ENCODE measurements at regions of chr1 and their contacts with region 1.

Region 1: DNA sequence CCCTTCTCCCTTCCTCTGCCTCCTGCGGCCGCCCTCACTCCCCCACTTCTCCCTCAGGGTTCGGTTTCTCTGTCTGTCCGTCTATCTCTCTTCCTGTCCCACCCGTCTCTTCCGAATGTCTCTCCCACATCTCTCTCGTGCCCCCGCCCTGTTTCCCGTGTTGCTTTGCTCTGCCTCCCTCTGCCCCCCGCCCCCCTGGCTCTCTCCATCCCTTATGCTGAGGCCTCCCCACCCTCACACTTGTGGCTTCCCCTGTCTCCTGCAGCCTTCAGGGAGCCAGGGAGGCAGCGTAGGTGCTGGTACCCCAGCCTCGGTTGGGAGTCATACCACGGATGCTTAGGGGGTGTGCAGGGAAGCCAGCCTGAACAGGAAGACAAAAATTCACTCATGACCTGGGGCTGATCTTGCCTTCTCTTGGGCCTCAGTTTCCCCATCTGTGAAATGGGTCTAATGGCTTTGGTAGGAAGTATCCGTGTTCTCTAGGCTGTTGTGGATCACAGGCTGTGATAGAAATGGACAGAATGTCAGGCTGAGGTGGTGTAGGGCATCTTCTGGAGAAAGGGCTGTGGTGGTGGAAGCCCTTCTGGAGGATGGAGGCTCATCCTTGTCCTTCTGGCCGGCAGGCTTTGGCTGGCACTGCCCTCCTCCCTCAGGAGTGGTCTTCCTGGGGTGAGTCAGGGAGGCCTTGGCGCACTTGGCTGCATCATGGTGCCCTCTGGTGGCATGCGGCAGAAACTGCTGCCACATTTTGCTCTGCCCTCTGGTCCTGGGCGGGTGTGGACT is 55.5 kb downstream of the FOXO6 start:
- DNase-seq: peak; percentile 78
- ATAC-seq: peak; percentile 74
- H3K4me3 Mint-ChIP-seq: no peak overlapping the region
- H3K27ac Mint-ChIP-seq: no peak overlapping the region
- H3K4me1 Mint-ChIP-seq: no peaks in the 10 kb centered on the region
- H3K27me3 Mint-ChIP-seq: peaks cover 7% of the 10 kb centered on the region

Region 2: GRCh38 chr1:41093826-41094225 is 322.9 kb before region 1 on chr1:
- CTCF ChIA-PET with region 1: no interaction called
- POLR2A ChIA-PET with region 1: no interaction called
- intact Hi-C with region 1: no loop called
- DNase-seq: no peak
- ATAC-seq: no peak
- H3K4me3 Mint-ChIP-seq: no peak overlapping the region
- H3K27ac Mint-ChIP-seq: no peak overlapping the region
- H3K4me1 Mint-ChIP-seq: no peaks in the 10 kb centered on the region
- H3K27me3 Mint-ChIP-seq: no peaks in the 10 kb centered on the region

Region 3: GRCh38 chr1:41144285-41144684 is 272.5 kb before region 1 on chr1:
- CTCF ChIA-PET with region 1: no interaction called
- POLR2A ChIA-PET with region 1: no interaction called
- intact Hi-C with region 1: no loop called
- DNase-seq: no peak
- ATAC-seq: no peak
- H3K4me3 Mint-ChIP-seq: no peak overlapping the region
- H3K27ac Mint-ChIP-seq: no peak overlapping the region
- H3K4me1 Mint-ChIP-seq: no peaks in the 10 kb centered on the region
- H3K27me3 Mint-ChIP-seq: no peaks in the 10 kb centered on the region

Region 4: DNA sequence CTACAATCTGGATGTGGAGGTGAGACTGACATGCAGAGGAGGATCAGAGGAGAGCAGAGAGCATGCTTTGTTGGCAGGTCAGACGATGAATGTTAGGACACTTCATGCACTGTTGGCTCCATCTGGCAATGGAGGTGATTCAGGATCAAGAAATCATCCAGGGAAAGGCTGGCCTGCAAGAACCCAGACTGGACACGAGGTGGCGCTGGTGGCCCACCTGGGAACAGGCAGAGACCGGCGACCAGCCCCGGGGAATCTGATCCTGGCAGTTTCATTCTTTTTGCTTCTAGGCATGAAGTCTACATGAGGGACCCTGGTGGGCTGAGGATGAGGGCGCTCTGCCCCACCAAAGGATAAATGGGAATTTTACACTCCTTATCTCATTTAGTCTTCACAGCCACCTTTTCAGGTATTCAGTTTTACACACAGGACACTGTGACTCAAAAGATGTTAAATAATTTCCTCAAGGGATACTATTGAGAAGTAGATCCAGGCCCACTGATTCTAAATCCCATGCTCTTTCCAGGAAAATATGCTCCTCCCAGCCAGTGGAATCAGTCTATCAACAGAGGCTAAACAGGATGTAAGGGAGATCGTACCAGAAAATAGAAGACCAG is 148.5 kb before region 1 on chr1:
- CTCF ChIA-PET with region 1: interaction called, 7 read pairs
- POLR2A ChIA-PET with region 1: no interaction called
- intact Hi-C with region 1: loop called (anchors 1 kb)
- DNase-seq: peak; percentile 80
- ATAC-seq: peak; percentile 57
- H3K4me3 Mint-ChIP-seq: no peak overlapping the region
- H3K27ac Mint-ChIP-seq: no peak overlapping the region
- H3K4me1 Mint-ChIP-seq: no peaks in the 10 kb centered on the region
- H3K27me3 Mint-ChIP-seq: peaks cover 9% of the 10 kb centered on the region

Region 5: DNA sequence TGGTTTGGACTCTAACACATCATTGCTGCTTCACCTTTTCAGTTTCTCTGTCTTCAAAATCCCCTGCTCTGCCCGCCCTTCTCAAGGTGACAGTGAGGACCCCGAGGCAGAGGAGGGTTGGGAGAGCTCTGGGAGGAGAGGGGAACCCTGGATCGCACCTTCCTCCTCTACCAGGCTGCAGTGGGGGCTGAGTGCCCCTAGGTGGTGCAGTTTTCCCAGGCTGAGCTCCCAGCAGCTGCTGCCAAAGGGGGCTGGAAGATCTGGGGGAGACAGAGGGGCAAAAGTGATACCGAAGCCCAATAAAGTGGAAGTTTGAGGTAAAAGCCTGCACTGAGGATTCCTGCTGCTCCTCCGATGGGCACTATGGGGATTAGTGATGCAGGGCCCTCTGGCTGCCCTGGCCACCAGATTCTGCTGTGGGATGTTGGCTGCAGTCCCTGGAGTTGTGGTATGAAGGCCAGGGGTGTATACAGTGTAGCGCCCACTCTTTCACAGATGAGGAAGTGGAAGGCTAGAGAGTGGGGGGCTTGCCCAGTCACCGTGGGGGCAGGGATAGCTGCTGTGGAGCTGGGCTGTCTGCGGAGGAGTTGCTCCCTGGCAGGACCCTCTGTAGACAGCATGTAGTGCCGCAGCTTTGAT is 133.9 kb before region 1 on chr1:
- CTCF ChIA-PET with region 1: interaction called, 16 read pairs
- POLR2A ChIA-PET with region 1: no interaction called
- intact Hi-C with region 1: loop called (anchors 1 kb)
- DNase-seq: peak; percentile 57
- ATAC-seq: no peak
- H3K4me3 Mint-ChIP-seq: no peak overlapping the region
- H3K27ac Mint-ChIP-seq: no peak overlapping the region
- H3K4me1 Mint-ChIP-seq: peaks cover 2% of the 10 kb centered on the region
- H3K27me3 Mint-ChIP-seq: peaks cover 32% of the 10 kb centered on the region

Region 6: DNA sequence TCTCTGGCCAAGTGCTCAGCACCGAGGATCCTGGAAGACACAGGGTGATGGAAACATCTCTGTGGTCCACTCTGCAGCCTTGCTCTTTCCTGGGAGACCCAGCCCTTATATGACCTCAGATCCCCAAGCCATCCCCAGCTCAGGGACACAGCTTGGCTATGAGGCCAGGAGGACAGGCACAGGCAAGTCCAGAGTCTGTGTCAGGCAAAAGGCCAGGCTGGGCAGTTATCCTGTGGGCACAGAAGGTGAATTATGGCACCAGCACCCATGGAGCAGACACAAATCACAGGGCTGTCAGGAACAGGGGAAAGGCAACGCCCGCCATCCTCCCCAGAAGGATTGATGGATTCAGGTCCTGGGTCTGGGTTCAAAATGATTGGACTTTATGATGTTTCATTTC is 122.5 kb before region 1 on chr1:
- CTCF ChIA-PET with region 1: no interaction called
- POLR2A ChIA-PET with region 1: no interaction called
- intact Hi-C with region 1: no loop called
- DNase-seq: no peak
- ATAC-seq: no peak
- H3K4me3 Mint-ChIP-seq: no peak overlapping the region
- H3K27ac Mint-ChIP-seq: no peak overlapping the region
- H3K4me1 Mint-ChIP-seq: no peaks in the 10 kb centered on the region
- H3K27me3 Mint-ChIP-seq: peaks cover 21% of the 10 kb centered on the region

Region 7: GRCh38 chr1:41313661-41314131 is 103.0 kb before region 1 on chr1:
- CTCF ChIA-PET with region 1: interaction called, 6 read pairs
- POLR2A ChIA-PET with region 1: no interaction called
- intact Hi-C with region 1: loop called in 1 of 2 experiments (anchors 2 kb)
- DNase-seq: peak; percentile 36
- ATAC-seq: peak; percentile 39
- H3K4me3 Mint-ChIP-seq: no peak overlapping the region
- H3K27ac Mint-ChIP-seq: no peak overlapping the region
- H3K4me1 Mint-ChIP-seq: no peaks in the 10 kb centered on the region
- H3K27me3 Mint-ChIP-seq: peaks cover 3% of the 10 kb centered on the region

Region 8: GRCh38 chr1:41322835-41323627 is 93.7 kb before region 1 on chr1:
- CTCF ChIA-PET with region 1: interaction called, 15 read pairs
- POLR2A ChIA-PET with region 1: no interaction called
- intact Hi-C with region 1: loop called (anchors 1 to 2 kb)
- DNase-seq: peak; percentile 62
- ATAC-seq: peak; percentile 76
- H3K4me3 Mint-ChIP-seq: no peak overlapping the region
- H3K27ac Mint-ChIP-seq: no peak overlapping the region
- H3K4me1 Mint-ChIP-seq: no peaks in the 10 kb centered on the region
- H3K27me3 Mint-ChIP-seq: no peaks in the 10 kb centered on the region

Region 9: DNA sequence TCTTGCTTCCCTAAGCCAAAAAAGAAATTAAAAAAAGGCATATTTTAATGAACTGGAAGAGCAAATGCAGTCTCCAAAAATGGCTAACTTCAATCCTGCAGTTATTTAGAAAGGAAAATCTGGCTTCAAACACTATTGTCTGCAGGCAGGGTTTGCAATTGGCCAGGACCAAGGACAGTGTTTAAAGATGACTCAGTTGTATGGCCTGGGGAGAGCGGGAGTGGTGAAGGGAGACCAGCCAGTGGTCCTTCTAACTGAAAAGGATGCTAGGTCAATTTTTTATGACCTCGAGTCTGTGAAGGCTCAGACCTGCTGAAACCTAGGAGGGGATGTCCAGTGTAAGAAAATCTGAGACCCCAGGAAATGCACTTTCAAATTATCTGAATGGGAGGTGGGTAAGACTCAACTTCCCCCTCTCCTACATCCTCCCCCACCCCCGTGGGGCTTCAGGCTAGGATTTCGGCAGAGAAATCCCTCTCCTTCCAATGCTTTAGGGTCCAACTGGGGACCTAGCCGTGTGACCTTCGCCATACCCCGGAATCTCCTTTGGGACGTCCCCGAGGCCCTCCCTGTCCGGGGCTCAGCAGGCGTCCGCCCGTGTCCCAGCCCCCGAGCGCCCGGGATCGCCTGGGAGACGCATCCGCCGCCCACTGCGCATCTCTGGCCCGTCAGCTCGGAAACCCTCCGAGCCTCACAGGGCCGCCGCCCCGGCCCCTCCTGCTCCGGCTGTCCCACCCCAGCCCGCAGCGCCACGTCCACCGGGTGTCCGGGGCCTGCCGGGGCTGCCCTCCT is 963.2 kb after region 1 on chr1:
- CTCF ChIA-PET with region 1: no interaction called
- POLR2A ChIA-PET with region 1: no interaction called
- intact Hi-C with region 1: no loop called
- DNase-seq: peak; percentile 19
- ATAC-seq: peak; percentile 42
- H3K4me3 Mint-ChIP-seq: peak overlapping the region; percentile 70
- H3K27ac Mint-ChIP-seq: no peak overlapping the region
- H3K4me1 Mint-ChIP-seq: peaks cover 3% of the 10 kb centered on the region
- H3K27me3 Mint-ChIP-seq: peaks cover 35% of the 10 kb centered on the region

Measured in activated CD4-positive, alpha-beta T cell treated with anti-CD3 and anti-CD28 coated beads for 36 hours (primary cell).